WTC11 (cell line): ENCODE measurements at regions of chr2 and their contacts with region 1.

Region 1: DNA sequence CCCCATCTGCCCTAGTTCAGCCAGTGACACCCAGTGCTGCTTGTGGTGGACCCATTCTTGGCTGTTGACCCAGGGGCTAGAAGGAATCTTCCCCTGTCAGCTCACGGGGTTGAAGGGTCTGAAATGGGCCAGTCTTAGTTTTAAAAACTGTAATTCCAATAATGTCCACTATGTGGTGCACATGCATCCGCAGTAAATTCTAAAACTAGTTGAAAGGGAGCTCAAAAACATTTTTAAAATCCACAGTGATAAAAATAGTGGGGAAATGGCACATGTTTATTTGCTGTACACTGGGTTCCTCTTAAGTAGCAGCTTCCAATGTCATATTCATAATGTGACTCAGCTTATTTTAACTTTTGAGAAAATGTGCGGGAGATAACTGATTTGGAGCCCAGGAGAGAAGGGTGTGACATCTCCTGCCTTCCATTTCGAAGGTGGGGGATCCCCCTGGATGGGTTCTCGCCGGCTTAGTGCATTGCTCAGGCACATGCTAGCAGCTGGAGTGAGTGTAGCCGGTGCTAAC is 32.8 kb downstream of the GRHL1 start:
- DNase-seq: no peak
- ATAC-seq: peak; percentile 90
- H3K4me3 Mint-ChIP-seq: no peak overlapping the region
- H3K27ac Mint-ChIP-seq: no peak overlapping the region
- H3K4me1 Mint-ChIP-seq: no peaks in the 10 kb centered on the region
- H3K27me3 Mint-ChIP-seq: no peaks in the 10 kb centered on the region
- CTCF ChIP-seq: peak; percentile 60

Region 2: GRCh38 chr2:9618410-9618809 is 365.9 kb before region 1 on chr2:
- CTCF ChIA-PET with region 1: no interaction called
- POLR2A ChIA-PET with region 1: no interaction called
- DNase-seq: no peak
- ATAC-seq: no peak
- H3K4me3 Mint-ChIP-seq: no peak overlapping the region
- H3K27ac Mint-ChIP-seq: no peak overlapping the region
- H3K4me1 Mint-ChIP-seq: peaks cover 42% of the 10 kb centered on the region
- H3K27me3 Mint-ChIP-seq: no peaks in the 10 kb centered on the region
- CTCF ChIP-seq: no peak

Region 3: GRCh38 chr2:9799665-9800632 is 184.3 kb before region 1 on chr2:
- CTCF ChIA-PET with region 1: interaction called, 12 read pairs
- POLR2A ChIA-PET with region 1: no interaction called
- DNase-seq: peak; percentile 96
- ATAC-seq: peak; percentile 90
- H3K4me3 Mint-ChIP-seq: no peak overlapping the region
- H3K27ac Mint-ChIP-seq: peak overlapping the region; percentile 88; the same call in 1 of the 2 replicates
- H3K4me1 Mint-ChIP-seq: peaks cover 19% of the 10 kb centered on the region
- H3K27me3 Mint-ChIP-seq: no peaks in the 10 kb centered on the region
- CTCF ChIP-seq: peak; percentile 83

Region 4: GRCh38 chr2:9941196-9941995 is 42.9 kb before region 1 on chr2:
- CTCF ChIA-PET with region 1: interaction called, 13 read pairs
- POLR2A ChIA-PET with region 1: no interaction called
- DNase-seq: peak; percentile 27
- ATAC-seq: peak; percentile 70
- H3K4me3 Mint-ChIP-seq: no peak overlapping the region
- H3K27ac Mint-ChIP-seq: no peak overlapping the region
- H3K4me1 Mint-ChIP-seq: peaks cover 27% of the 10 kb centered on the region
- H3K27me3 Mint-ChIP-seq: peaks cover 7% of the 10 kb centered on the region
- CTCF ChIP-seq: no peak

Region 5: GRCh38 chr2:10006236-10007161 is 22.2 kb after region 1 on chr2:
- CTCF ChIA-PET with region 1: interaction called, 10 read pairs
- POLR2A ChIA-PET with region 1: no interaction called
- DNase-seq: no peak
- ATAC-seq: no peak
- H3K4me3 Mint-ChIP-seq: no peak overlapping the region
- H3K27ac Mint-ChIP-seq: no peak overlapping the region
- H3K4me1 Mint-ChIP-seq: peaks cover 3% of the 10 kb centered on the region
- H3K27me3 Mint-ChIP-seq: no peaks in the 10 kb centered on the region; the same call in 1 of the 2 replicates
- CTCF ChIP-seq: no peak

Region 6: DNA sequence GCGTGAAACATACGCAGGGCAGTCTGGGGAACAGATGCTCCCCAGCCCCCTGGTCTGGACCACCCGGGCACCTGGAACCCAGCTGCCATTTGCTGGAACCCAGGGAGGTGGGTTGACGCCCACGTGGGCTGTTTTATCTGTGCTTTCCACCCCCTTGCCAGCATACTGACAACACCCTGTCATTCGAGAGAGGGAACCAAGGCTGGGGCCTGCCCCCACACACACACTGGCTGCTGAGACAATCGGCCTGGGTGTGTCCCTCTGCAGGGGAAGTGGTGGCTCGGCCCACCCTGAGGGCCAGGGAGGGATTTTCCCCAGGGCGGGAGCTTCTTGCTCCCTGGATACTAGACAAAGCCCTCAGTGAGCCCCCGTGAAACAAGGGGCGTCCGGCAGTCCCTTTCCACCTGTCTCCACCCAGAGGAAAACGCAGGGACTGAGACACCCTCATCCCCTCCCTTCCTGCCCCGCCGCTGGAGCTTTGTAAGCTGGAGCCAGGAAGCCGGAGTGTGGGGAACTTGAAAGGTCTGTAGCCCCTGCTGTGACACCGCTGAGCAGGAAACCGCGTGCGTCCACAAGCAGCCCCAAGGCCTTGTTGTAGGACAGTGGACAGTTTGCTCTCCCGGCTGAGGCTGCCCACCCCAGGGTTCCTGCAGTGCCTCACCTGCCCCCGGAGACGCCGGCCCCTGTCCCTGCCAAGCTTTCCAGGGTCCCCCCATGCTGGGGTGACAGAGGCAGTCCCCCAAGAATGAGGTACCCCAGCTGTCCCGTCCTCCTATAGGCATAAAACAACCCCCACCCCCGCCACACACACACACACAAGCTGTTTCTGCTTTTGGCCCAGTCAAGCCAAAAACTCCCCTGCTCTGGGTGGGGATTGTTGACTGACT is 45.0 kb after region 1 on chr2:
- CTCF ChIA-PET with region 1: interaction called, 35 read pairs
- POLR2A ChIA-PET with region 1: interaction called, 3 read pairs
- DNase-seq: peak; percentile 52
- ATAC-seq: peak; percentile 69
- H3K4me3 Mint-ChIP-seq: no peak overlapping the region
- H3K27ac Mint-ChIP-seq: no peak overlapping the region
- H3K4me1 Mint-ChIP-seq: peaks cover 19% of the 10 kb centered on the region
- H3K27me3 Mint-ChIP-seq: no peaks in the 10 kb centered on the region
- CTCF ChIP-seq: no peak

Region 7: DNA sequence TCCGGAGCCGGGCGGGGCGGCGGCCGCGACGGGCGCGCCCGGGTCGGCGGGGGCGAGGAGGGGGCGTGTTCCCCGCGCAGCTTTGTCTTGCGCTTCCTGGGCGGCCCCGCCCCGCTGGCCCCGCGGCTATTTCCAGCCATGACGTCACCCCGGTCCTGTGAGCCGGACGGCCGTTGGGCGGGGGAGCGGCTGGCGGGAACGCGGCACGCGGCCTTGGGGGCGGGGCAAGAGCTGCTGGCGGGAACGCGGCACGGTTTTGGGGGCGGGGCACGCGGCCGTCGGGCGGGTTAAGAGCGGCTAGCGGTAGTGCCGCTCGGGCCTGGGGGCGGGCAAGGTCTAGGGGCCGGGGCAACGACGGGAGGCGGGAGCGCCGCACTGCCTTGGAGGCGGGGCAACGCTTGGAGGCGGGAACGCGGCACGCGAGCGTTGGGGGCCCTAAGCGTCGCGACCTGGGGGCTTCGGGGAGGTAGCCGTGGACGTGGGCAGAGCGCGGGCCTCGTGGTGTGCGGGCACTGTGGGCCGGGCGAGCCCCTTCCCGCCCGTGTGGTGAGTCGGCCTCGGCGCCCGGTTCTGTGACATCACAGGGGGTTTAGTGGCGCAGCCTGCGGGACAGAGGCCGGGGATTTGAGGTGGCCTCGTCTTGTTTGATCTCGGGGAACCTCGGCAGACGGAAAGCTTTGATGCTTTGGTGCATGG is 59.8 kb after region 1 on chr2:
- CTCF ChIA-PET with region 1: interaction called, 36 read pairs
- POLR2A ChIA-PET with region 1: no interaction called
- DNase-seq: peak; percentile 95
- ATAC-seq: peak; percentile 63
- H3K4me3 Mint-ChIP-seq: peak overlapping the region; percentile 49
- H3K27ac Mint-ChIP-seq: no peak overlapping the region
- H3K4me1 Mint-ChIP-seq: peaks cover 10% of the 10 kb centered on the region
- H3K27me3 Mint-ChIP-seq: peaks cover 38% of the 10 kb centered on the region
- CTCF ChIP-seq: no peak

Region 8: GRCh38 chr2:10072656-10073480 is 88.6 kb after region 1 on chr2:
- CTCF ChIA-PET with region 1: interaction called, 15 read pairs
- POLR2A ChIA-PET with region 1: no interaction called
- DNase-seq: peak; percentile 83
- ATAC-seq: peak; percentile 97
- H3K4me3 Mint-ChIP-seq: no peak overlapping the region
- H3K27ac Mint-ChIP-seq: no peak overlapping the region
- H3K4me1 Mint-ChIP-seq: peaks cover 18% of the 10 kb centered on the region
- H3K27me3 Mint-ChIP-seq: peaks cover 14% of the 10 kb centered on the region
- CTCF ChIP-seq: peak; percentile 89